ENCODE measurements at regions of chr5 and their contacts with region 1.

Region 1: GRCh38 chr5:54243473-54244080 is 66.8 kb downstream of the ARL15 start:
- DNase-seq: peak in 4 of 9 experiments; percentile 17 to 55 (median 41)
- ATAC-seq: no peak
- H3K4me3 ChIP-seq: no peak overlapping the region
- H3K4me3 Mint-ChIP-seq: no peak overlapping the region
- H3K27ac ChIP-seq: no peak overlapping the region
- H3K27ac Mint-ChIP-seq: no peak overlapping the region
- H3K4me1 ChIP-seq: no peaks in the 10 kb centered on the region
- H3K4me1 Mint-ChIP-seq: peaks cover 11% of the 10 kb centered on the region
- H3K27me3 ChIP-seq: no peaks in the 10 kb centered on the region
- H3K27me3 Mint-ChIP-seq: no peaks in the 10 kb centered on the region
- CTCF ChIP-seq: peak; percentile 76

Region 2: DNA sequence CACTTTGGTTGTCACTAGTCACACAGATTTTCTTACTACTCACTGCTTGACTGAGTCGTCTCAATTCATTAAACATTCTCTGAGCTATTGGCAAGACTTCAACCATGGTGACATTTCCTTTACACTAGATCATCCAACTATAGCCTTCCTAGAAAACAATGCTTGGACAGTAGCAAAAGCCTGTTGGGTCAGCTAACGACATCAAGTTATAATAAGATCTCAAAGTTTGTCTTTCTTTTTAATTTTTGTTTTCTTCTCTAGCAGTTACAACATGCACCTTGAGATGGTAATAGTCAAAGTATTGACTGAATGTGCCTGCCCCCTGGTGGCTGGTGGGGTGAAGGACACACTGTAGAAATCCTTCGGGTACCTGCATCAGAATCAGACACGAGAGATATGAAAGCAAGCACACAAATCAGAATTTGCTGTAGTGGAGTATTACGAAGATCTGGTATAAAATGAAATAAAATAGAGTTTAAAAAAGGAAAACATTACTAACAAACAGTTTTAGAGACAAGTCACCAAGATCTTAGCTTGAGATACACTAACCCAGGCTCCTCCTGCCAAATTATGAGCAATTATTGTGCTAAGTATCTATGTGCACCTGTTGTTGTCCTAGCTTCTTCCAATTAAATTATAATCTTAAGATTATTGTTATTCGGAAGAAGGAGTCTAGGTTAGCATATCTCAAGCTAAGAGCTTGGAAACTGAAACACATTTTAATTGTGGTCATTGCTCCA is 14.4 kb before region 1 on chr5:
- CTCF ChIA-PET with region 1: interaction called, 10 read pairs
- POLR2A ChIA-PET with region 1: no interaction called
- intact Hi-C with region 1: no loop called
- DNase-seq: peak; percentile 43 to 80 (median 68)
- ATAC-seq: peak; percentile 89
- H3K4me3 ChIP-seq: no peak overlapping the region
- H3K4me3 Mint-ChIP-seq: no peak overlapping the region
- H3K27ac ChIP-seq: no peak overlapping the region
- H3K27ac Mint-ChIP-seq: no peak overlapping the region
- H3K4me1 ChIP-seq: no peaks in the 10 kb centered on the region
- H3K4me1 Mint-ChIP-seq: peaks cover 8% of the 10 kb centered on the region
- H3K27me3 ChIP-seq: no peaks in the 10 kb centered on the region
- H3K27me3 Mint-ChIP-seq: no peaks in the 10 kb centered on the region
- CTCF ChIP-seq: peak; percentile 96

Region 3: GRCh38 chr5:54415896-54416601 is 172.5 kb after region 1 on chr5:
- CTCF ChIA-PET with region 1: interaction called, 24 read pairs
- POLR2A ChIA-PET with region 1: no interaction called
- intact Hi-C with region 1: loop called (anchors 1 kb)
- DNase-seq: no peak
- ATAC-seq: no peak
- H3K4me3 ChIP-seq: no peak overlapping the region
- H3K4me3 Mint-ChIP-seq: no peak overlapping the region
- H3K27ac ChIP-seq: no peak overlapping the region
- H3K27ac Mint-ChIP-seq: no peak overlapping the region
- H3K4me1 ChIP-seq: no peaks in the 10 kb centered on the region
- H3K4me1 Mint-ChIP-seq: no peaks in the 10 kb centered on the region
- H3K27me3 ChIP-seq: no peaks in the 10 kb centered on the region
- H3K27me3 Mint-ChIP-seq: no peaks in the 10 kb centered on the region
- CTCF ChIP-seq: no peak

Region 4: GRCh38 chr5:54492178-54492577 is 248.6 kb after region 1 on chr5:
- CTCF ChIA-PET with region 1: interaction called, 6 read pairs
- POLR2A ChIA-PET with region 1: no interaction called
- intact Hi-C with region 1: loop called in 1 of 2 experiments (anchors 2 kb)
- DNase-seq: no peak
- ATAC-seq: no peak
- H3K4me3 ChIP-seq: no peak overlapping the region
- H3K4me3 Mint-ChIP-seq: no peak overlapping the region
- H3K27ac ChIP-seq: no peak overlapping the region
- H3K27ac Mint-ChIP-seq: no peak overlapping the region
- H3K4me1 ChIP-seq: no peaks in the 10 kb centered on the region
- H3K4me1 Mint-ChIP-seq: peaks cover 3% of the 10 kb centered on the region
- H3K27me3 ChIP-seq: peaks cover 3 to 4% of the 10 kb centered on the region in 2 experiments
- H3K27me3 Mint-ChIP-seq: peaks cover 8% of the 10 kb centered on the region
- CTCF ChIP-seq: no peak

Region 5: DNA sequence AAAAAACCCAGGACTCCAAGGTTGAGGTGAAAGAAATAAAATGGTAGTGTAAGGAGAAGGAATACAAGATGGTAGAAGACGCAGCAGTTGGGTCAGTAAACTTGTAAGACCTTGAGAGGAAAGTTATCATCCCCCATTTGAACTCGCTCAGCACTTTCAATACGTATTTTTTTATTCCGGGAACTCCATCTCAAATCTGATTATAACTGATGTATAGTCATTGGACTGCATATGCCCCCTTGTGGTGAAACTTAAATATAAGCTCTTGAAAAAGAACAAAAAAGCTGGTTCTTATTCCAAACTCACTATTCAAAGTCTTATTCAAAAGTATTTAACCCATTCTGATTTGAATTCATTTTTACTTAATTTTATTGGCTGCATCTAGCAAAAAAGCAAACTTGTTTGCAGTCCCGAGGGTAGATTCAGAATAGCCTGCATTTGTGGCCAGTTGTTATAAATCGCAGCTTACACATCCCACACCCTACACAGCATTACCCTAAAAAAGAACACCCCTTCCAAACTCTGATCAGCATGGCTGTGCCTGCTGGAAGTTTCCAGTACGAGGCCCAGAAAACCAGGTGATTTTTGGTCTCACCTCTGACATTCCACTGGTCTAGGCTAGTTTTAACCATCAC is 623.9 kb after region 1 on chr5:
- CTCF ChIA-PET with region 1: interaction called, 6 read pairs
- POLR2A ChIA-PET with region 1: no interaction called
- intact Hi-C with region 1: loop called (anchors 5 kb)
- DNase-seq: peak in 2 of 9 experiments; percentile 63 to 76
- ATAC-seq: peak; percentile 72
- H3K4me3 ChIP-seq: no peak overlapping the region
- H3K4me3 Mint-ChIP-seq: peak overlapping the region; percentile 37
- H3K27ac ChIP-seq: no peak overlapping the region
- H3K27ac Mint-ChIP-seq: no peak overlapping the region
- H3K4me1 ChIP-seq: no peaks in the 10 kb centered on the region
- H3K4me1 Mint-ChIP-seq: peaks cover 4% of the 10 kb centered on the region
- H3K27me3 ChIP-seq: no peaks in the 10 kb centered on the region
- H3K27me3 Mint-ChIP-seq: peaks cover 5% of the 10 kb centered on the region
- CTCF ChIP-seq: peak; percentile 71